Activated B cell treated with CpG ODN at 0.5 μM for 24 hours (primary cell): ENCODE measurements at regions of chr20 and their contacts with region 1.

Region 1: GRCh38 chr20:49713753-49714712 is at the start of gene B4GALT5:
- DNase-seq: peak; percentile 81
- ATAC-seq: peak; percentile 79
- H3K4me3 Mint-ChIP-seq: peak within 1 kb of the TSS; percentile 96
- H3K27ac Mint-ChIP-seq: peak within 1 kb of the TSS; percentile 94
- H3K4me1 Mint-ChIP-seq: peaks cover 48% of the 10 kb centered on the region
- H3K27me3 Mint-ChIP-seq: no peaks in the 10 kb centered on the region
- CTCF ChIP-seq: no peak
- total RNA-seq, gene B4GALT5: 70.6 and 72.9 TPM in 2 replicates

Region 2: GRCh38 chr20:49620364-49621240 is 93.4 kb before region 1 on chr20:
- CTCF ChIA-PET with region 1: no interaction called
- POLR2A ChIA-PET with region 1: interaction called, 6 read pairs
- intact Hi-C with region 1: loop called (anchors 1 kb)
- DNase-seq: peak; percentile 42
- ATAC-seq: peak; percentile 87
- H3K4me3 Mint-ChIP-seq: no peak overlapping the region
- H3K27ac Mint-ChIP-seq: no peak overlapping the region
- H3K4me1 Mint-ChIP-seq: peaks cover 14% of the 10 kb centered on the region
- H3K27me3 Mint-ChIP-seq: peaks cover 3% of the 10 kb centered on the region
- CTCF ChIP-seq: no peak

Region 3: GRCh38 chr20:49685809-49686208 is 28.2 kb before region 1 on chr20:
- CTCF ChIA-PET with region 1: no interaction called
- POLR2A ChIA-PET with region 1: no interaction called
- intact Hi-C with region 1: no loop called
- DNase-seq: no peak
- ATAC-seq: no peak
- H3K4me3 Mint-ChIP-seq: no peak overlapping the region
- H3K27ac Mint-ChIP-seq: no peak overlapping the region
- H3K4me1 Mint-ChIP-seq: peaks cover 41% of the 10 kb centered on the region
- H3K27me3 Mint-ChIP-seq: no peaks in the 10 kb centered on the region
- CTCF ChIP-seq: no peak

Region 4: DNA sequence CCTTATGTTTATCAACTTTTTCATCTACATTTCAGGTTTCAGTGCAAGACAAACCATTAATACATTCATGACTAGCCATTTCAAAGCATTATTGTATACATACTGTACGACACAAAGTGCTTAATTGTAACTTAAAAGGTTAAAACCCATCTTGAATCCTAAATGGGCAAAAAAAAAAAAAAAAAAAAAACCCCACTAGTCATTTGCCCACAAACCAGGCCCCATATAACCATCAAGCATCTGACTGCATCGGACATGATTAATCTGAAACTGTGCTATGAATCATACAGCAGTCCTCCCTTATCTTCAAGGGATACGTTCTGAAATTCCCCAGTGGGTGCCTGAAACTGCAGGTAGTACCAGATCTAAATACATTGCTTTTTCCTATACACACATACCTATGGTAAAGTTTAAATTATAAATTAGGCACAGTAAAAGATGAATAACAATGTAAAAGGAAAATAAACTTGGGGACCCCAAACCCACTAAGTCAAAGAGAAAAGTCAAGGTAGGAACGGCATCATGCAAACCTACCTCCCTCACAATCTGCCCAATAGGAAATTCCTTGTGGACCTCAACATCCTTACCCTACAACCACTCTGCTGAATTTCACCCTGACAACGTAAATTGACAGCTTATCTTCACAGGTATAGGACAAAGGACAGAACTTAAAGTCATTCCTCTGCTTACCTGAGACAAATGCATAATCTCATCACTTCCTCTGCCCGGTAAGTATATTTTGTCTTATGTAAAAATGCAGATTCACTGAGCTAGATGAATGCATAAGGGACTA is 14.6 kb before region 1 on chr20:
- CTCF ChIA-PET with region 1: no interaction called
- POLR2A ChIA-PET with region 1: interaction called, 7 read pairs
- intact Hi-C with region 1: loop called (anchors 1 kb)
- DNase-seq: no peak
- ATAC-seq: peak; percentile 96
- H3K4me3 Mint-ChIP-seq: peak overlapping the region; percentile 66
- H3K27ac Mint-ChIP-seq: peak overlapping the region; percentile 79
- H3K4me1 Mint-ChIP-seq: peaks cover 76% of the 10 kb centered on the region
- H3K27me3 Mint-ChIP-seq: no peaks in the 10 kb centered on the region
- CTCF ChIP-seq: no peak

Region 5: GRCh38 chr20:49785852-49786175 is 71.8 kb after region 1 on chr20:
- CTCF ChIA-PET with region 1: no interaction called
- POLR2A ChIA-PET with region 1: interaction called, 10 read pairs
- intact Hi-C with region 1: loop called (anchors 1 kb)
- DNase-seq: peak; percentile 35
- ATAC-seq: peak; percentile 77
- H3K4me3 Mint-ChIP-seq: peak overlapping the region; percentile 78
- H3K27ac Mint-ChIP-seq: peak overlapping the region; percentile 95
- H3K4me1 Mint-ChIP-seq: peaks cover 61% of the 10 kb centered on the region
- H3K27me3 Mint-ChIP-seq: no peaks in the 10 kb centered on the region
- CTCF ChIP-seq: no peak

Region 6: DNA sequence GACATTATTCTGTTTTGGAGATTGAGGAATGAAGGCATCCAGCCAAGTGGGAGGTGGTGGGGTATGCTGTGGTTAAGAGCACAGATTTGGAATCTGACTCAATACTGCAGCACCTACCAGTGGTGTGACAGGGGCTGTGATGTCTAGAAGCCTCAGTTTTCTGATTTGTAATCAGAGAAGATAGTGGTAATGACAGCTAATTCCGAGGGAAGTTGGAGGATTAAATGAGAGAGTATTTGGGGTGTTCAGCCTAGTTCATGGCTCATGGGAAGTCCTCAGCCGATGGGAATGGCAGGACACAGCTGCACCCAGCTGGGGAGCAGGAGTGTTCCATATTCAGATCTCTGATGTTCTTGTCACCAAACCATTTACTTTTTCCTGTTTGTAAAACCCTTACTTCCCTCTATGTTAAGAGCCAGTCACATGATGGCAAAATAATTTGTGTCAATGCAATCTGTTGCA is 107.9 kb after region 1 on chr20:
- CTCF ChIA-PET with region 1: interaction called, 3 read pairs
- POLR2A ChIA-PET with region 1: interaction called, 11 read pairs
- intact Hi-C with region 1: no loop called
- DNase-seq: no peak
- ATAC-seq: no peak
- H3K4me3 Mint-ChIP-seq: peak overlapping the region; percentile 24
- H3K27ac Mint-ChIP-seq: peak overlapping the region; percentile 76
- H3K4me1 Mint-ChIP-seq: peaks cover 48% of the 10 kb centered on the region
- H3K27me3 Mint-ChIP-seq: no peaks in the 10 kb centered on the region
- CTCF ChIP-seq: no peak